CD4-positive, alpha-beta T cell (primary cell): ENCODE measurements at regions of chr1 and their contacts with region 1.

Region 1: GRCh38 chr1:166910396-166910994 is 34.4 kb upstream of the TADA1 start:
- DNase-seq: peak; percentile 54 to 92 (median 68)
- ATAC-seq: peak; percentile 100
- H3K4me3 ChIP-seq: no peak overlapping the region
- H3K4me3 Mint-ChIP-seq: no peak overlapping the region
- H3K27ac ChIP-seq: no peak overlapping the region
- H3K27ac Mint-ChIP-seq: no peak overlapping the region
- H3K4me1 ChIP-seq: peaks cover 3% of the 10 kb centered on the region
- H3K4me1 Mint-ChIP-seq: no peaks in the 10 kb centered on the region
- H3K27me3 ChIP-seq: no peaks in the 10 kb centered on the region
- H3K27me3 Mint-ChIP-seq: no peaks in the 10 kb centered on the region
- CTCF ChIP-seq: peak; percentile 81

Region 2: GRCh38 chr1:167059045-167059808 is 148.7 kb after region 1 on chr1:
- CTCF ChIA-PET with region 1: interaction called, 175 read pairs
- POLR2A ChIA-PET with region 1: interaction called, 14 read pairs
- intact Hi-C with region 1: loop called (anchors 1 kb)
- DNase-seq: peak; percentile 58 to 83 (median 66)
- ATAC-seq: peak; percentile 69
- H3K4me3 ChIP-seq: no peak overlapping the region
- H3K4me3 Mint-ChIP-seq: no peak overlapping the region
- H3K27ac ChIP-seq: no peak overlapping the region
- H3K27ac Mint-ChIP-seq: no peak overlapping the region
- H3K4me1 ChIP-seq: peaks cover 4% of the 10 kb centered on the region
- H3K4me1 Mint-ChIP-seq: peaks cover 9% of the 10 kb centered on the region
- H3K27me3 ChIP-seq: no peaks in the 10 kb centered on the region
- H3K27me3 Mint-ChIP-seq: no peaks in the 10 kb centered on the region
- CTCF ChIP-seq: peak; percentile 97

Region 3: GRCh38 chr1:167128261-167129227 is 218.0 kb after region 1 on chr1:
- CTCF ChIA-PET with region 1: interaction called, 4 read pairs
- POLR2A ChIA-PET with region 1: interaction called, 4 read pairs
- intact Hi-C with region 1: loop called in 1 of 2 experiments (anchors 2 kb)
- DNase-seq: peak in 3 of 14 experiments; percentile 11 to 31 (median 30)
- ATAC-seq: peak; percentile 37
- H3K4me3 ChIP-seq: no peak overlapping the region
- H3K4me3 Mint-ChIP-seq: no peak overlapping the region
- H3K27ac ChIP-seq: no peak overlapping the region
- H3K27ac Mint-ChIP-seq: no peak overlapping the region
- H3K4me1 ChIP-seq: no peaks in the 10 kb centered on the region
- H3K4me1 Mint-ChIP-seq: no peaks in the 10 kb centered on the region
- H3K27me3 ChIP-seq: peaks cover 3 to 6% of the 10 kb centered on the region in 2 experiments
- H3K27me3 Mint-ChIP-seq: peaks cover 12% of the 10 kb centered on the region
- CTCF ChIP-seq: peak; percentile 20

Region 4: DNA sequence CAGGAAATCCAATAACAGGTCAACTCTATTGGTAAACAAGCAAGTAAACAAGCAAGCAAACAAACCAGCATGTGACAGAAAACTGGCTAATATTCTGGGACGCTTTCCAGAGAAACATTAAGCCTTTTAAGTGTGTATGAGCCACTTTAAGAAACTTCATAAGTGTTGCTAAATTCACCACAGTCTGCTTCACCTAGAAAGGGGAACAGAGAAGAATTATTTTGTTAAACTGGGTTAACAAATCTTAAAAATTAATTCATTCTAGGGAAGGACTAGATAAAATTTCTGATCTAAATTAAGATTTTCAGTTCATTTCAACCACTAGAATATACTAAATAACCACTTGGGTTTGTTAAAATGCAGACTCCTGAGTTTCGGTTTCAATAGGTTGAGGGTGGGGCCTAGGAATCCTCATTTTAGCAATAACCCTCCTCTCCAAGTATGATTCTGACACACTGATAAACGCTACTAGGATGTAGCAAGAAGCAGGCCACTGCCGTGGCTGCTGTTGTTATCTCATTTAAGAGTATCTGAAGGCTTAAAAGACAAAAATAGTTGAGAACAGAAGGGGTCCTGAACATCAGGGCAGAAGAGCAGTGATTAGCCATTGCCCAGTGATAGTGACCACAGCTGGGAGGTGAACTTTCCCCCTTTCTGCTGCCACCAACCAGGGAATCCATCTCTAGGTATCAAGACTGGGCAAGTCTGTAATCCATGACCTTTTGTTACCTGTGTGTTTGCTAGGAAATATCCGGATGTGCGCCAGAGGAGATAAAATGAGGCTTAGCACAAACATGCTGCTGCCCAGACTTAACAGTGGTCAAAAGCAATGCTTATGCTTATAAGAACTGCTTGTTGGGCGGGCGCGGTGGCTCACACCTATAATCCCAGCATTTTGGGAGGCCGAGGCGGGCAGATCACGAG is 631.9 kb after region 1 on chr1:
- CTCF ChIA-PET with region 1: no interaction called
- POLR2A ChIA-PET with region 1: no interaction called
- intact Hi-C with region 1: loop called in 1 of 2 experiments (anchors 5 kb)
- DNase-seq: no peak
- ATAC-seq: no peak
- H3K4me3 ChIP-seq: no peak overlapping the region
- H3K4me3 Mint-ChIP-seq: no peak overlapping the region
- H3K27ac ChIP-seq: no peak overlapping the region
- H3K27ac Mint-ChIP-seq: no peak overlapping the region
- H3K4me1 ChIP-seq: no peaks in the 10 kb centered on the region
- H3K4me1 Mint-ChIP-seq: peaks cover 19% of the 10 kb centered on the region
- H3K27me3 ChIP-seq: no peaks in the 10 kb centered on the region
- H3K27me3 Mint-ChIP-seq: no peaks in the 10 kb centered on the region
- CTCF ChIP-seq: no peak